Heart left ventricle (tissue), 16 donors: ENCODE measurements at regions of chr19 and their contacts with region 1.

Region 1: GRCh38 chr19:6412447-6413091 is 12.0 kb downstream of the KHSRP start:
- DNase-seq: no peak
- ATAC-seq: peak; percentile 26 to 37 (median 32)
- H3K4me3 ChIP-seq: no peak overlapping the region
- H3K27ac ChIP-seq: peak overlapping the region in 3 of 12 donors; percentile 33 to 39 (median 39)
- H3K4me1 ChIP-seq: peaks cover 0 to 12% (median 1%) of the 10 kb centered on the region in 12 donors
- H3K27me3 ChIP-seq: no peaks in the 10 kb centered on the region
- CTCF ChIP-seq: peak; percentile 23 to 65 (median 49)
- POLR2A ChIP-seq: no peak

Region 2: DNA sequence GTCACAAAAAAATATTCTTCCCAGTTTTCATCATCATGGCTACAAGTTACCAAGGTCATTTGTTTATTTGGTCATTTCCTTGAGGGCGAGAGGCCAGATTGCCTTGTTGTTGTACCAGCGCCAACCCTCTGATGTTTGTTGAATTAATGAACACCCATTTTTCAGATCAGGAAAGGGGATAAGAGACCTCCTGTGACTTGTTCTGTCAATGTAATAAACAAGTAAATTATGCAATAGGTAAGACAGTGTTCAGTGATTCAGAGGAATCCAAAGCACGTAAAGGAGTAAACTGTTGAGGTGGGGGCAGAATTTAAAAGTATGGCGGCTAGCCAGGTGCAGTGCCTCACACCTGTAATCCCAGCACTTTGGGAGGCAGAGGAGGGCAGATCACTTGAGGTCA is 210.6 kb before region 1 on chr19:
- intact Hi-C with region 1: loop called in 1 of 10 experiments (anchors 10 kb)
- DNase-seq: no peak
- ATAC-seq: no peak
- H3K4me3 ChIP-seq: no peak overlapping the region
- H3K27ac ChIP-seq: no peak overlapping the region
- H3K4me1 ChIP-seq: peaks cover 0 to 18% (median 9%) of the 10 kb centered on the region in 12 donors
- H3K27me3 ChIP-seq: no peaks in the 10 kb centered on the region
- CTCF ChIP-seq: no peak
- POLR2A ChIP-seq: no peak

Region 3: DNA sequence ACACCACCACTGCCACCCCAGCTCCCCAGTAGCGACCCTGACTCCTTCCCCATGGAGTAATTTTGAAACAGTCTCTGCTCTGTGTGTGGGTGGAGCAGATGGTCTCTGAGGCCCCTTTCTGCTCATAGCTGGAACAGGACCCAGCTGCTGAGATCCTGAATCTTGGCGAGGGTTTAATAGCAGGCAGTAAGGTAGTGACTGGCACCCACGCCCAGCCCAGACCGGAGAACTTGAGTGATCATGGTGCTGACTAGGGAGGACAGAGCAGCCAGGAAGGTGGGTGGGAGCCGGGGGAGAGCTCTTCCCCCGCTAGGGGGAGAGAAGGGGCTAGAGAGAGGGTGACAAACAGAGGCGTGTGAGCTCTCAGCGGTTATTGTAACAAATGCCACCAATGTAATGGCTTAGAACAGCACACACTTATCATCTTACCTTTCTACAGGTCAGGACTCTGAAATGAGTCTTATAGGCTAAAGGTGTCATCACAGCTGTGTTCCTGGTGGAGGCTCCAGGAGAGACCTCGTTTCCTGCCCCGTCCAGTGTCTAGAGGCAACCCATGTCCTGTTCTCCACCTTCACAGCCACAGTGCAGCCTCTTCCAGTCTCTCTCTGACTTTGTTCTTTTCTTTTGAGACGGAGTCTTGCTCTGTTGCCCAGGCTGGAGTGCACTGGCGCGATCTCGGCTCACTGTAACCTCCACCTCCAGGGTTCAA is 71.9 kb before region 1 on chr19:
- intact Hi-C with region 1: no loop called
- DNase-seq: no peak
- ATAC-seq: no peak
- H3K4me3 ChIP-seq: no peak overlapping the region
- H3K27ac ChIP-seq: no peak overlapping the region
- H3K4me1 ChIP-seq: no peaks in the 10 kb centered on the region
- H3K27me3 ChIP-seq: no peaks in the 10 kb centered on the region
- CTCF ChIP-seq: no peak
- POLR2A ChIP-seq: no peak

Region 4: GRCh38 chr19:6476155-6476895 is 63.8 kb after region 1 on chr19:
- intact Hi-C with region 1: no loop called
- DNase-seq: peak in 1 of 5 donors; percentile 41
- ATAC-seq: peak in 3 of 4 donors; percentile 16 to 67 (median 50)
- H3K4me3 ChIP-seq: peak overlapping the region in 3 of 12 donors; percentile 8 to 24 (median 14)
- H3K27ac ChIP-seq: no peak overlapping the region
- H3K4me1 ChIP-seq: peaks cover 0 to 18% (median 3%) of the 10 kb centered on the region in 12 donors
- H3K27me3 ChIP-seq: peaks cover 18 to 49% (median 27%) of the 10 kb centered on the region in 9 donors
- CTCF ChIP-seq: no peak
- POLR2A ChIP-seq: no peak